ENCODE measurements at regions of chr4 and their contacts with region 1.

Region 1: GRCh38 chr4:1266881-1267763 is 18.2 kb upstream of the CTBP1 start:
- DNase-seq: no peak
- H3K4me3 Mint-ChIP-seq: peak overlapping the region; percentile 76
- H3K27ac Mint-ChIP-seq: peak overlapping the region; percentile 95
- H3K4me1 Mint-ChIP-seq: peaks cover 29% of the 10 kb centered on the region
- H3K27me3 Mint-ChIP-seq: no peaks in the 10 kb centered on the region

Region 2: GRCh38 chr4:1011022-1011694 is 256.0 kb before region 1 on chr4 and contains the start of gene FGFRL1:
- intact Hi-C with region 1: loop called (anchors 5 kb)
- DNase-seq: peak; percentile 89
- H3K4me3 Mint-ChIP-seq: peak within 1 kb of the TSS; percentile 86
- H3K27ac Mint-ChIP-seq: peak within 1 kb of the TSS; percentile 89
- H3K4me1 Mint-ChIP-seq: peaks cover 15% of the 10 kb centered on the region
- H3K27me3 Mint-ChIP-seq: peaks cover 28% of the 10 kb centered on the region
- total RNA-seq, gene FGFRL1: 15.5 TPM in 2 replicates

Region 3: DNA sequence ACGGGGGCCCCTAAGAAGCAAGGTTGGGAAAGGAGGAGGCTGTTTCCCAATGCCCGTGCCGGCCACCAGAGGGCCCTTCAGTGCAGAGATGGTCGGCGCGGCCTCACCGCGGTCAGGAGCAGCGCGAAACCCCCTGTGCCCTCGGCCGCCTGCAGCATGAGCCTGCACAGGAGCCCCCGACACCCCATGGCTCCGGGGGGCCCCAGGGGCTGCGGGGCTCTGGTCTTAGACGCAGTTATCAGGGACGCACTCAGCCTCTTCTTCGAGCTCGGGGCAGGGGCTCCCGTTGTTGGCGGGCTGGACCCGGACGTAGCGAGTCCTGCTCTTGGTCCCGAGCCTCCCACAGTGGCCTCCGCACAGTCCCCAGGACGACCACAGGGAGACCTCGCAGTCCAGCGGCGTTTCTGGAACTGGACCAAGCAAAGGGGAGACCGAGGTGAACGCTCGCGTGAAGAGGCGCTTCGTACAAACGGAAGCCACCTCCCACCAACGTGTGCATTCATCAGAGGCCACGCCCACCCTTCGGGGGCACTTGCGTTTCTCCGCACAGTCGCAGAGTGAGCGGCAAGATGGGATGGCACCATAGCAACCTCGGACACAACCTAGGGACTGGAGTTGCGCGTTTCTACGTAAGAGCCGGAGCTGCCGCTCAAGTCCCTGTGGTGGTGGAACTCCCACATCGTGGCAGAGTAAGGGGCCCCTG is 99.7 kb before region 1 on chr4:
- intact Hi-C with region 1: loop called (anchors 1 kb)
- DNase-seq: peak; percentile 83
- H3K4me3 Mint-ChIP-seq: peak overlapping the region; percentile 79
- H3K27ac Mint-ChIP-seq: peak overlapping the region; percentile 69
- H3K4me1 Mint-ChIP-seq: peaks cover 15% of the 10 kb centered on the region
- H3K27me3 Mint-ChIP-seq: peaks cover 13% of the 10 kb centered on the region

Region 4: DNA sequence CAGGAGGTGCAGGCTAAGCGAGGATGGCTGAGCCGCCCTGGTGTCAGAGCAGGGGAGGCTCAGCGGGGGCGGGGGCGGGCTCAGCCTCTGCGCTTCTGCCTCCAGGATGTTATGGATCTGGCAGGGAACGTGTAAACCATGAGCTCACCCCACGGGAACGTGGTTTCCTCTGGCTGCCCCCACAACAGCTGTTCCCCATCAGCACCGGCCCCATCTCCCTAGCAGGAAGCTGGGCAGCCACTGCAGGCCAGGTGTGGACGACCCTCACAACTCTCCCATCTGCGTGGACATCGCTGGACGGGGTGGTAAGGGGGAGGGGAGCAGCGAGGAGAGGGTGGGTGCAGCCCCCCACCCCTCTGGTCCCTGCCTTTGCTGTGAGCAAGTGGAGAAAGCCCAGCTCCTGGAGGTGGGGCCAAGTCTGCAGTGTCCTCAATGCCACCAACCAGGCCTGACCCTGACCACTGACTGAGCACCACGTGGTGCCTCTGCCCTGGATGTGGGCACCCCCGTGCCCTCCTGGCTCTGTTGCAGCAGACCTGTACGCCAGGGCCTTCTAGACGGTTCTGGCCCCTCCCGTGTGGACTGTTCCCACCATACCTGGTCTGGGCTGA is 66.6 kb before region 1 on chr4:
- intact Hi-C with region 1: loop called (anchors 1 kb)
- DNase-seq: no peak
- H3K4me3 Mint-ChIP-seq: peak overlapping the region; percentile 75
- H3K27ac Mint-ChIP-seq: peak overlapping the region; percentile 100
- H3K4me1 Mint-ChIP-seq: peaks cover 41% of the 10 kb centered on the region
- H3K27me3 Mint-ChIP-seq: no peaks in the 10 kb centered on the region

Region 5: GRCh38 chr4:1351854-1352633 is 84.9 kb after region 1 on chr4:
- intact Hi-C with region 1: loop called (anchors 1 kb)
- DNase-seq: peak; percentile 84
- H3K4me3 Mint-ChIP-seq: no peak overlapping the region
- H3K27ac Mint-ChIP-seq: peak overlapping the region; percentile 70
- H3K4me1 Mint-ChIP-seq: peaks cover 20% of the 10 kb centered on the region
- H3K27me3 Mint-ChIP-seq: no peaks in the 10 kb centered on the region

Region 6: DNA sequence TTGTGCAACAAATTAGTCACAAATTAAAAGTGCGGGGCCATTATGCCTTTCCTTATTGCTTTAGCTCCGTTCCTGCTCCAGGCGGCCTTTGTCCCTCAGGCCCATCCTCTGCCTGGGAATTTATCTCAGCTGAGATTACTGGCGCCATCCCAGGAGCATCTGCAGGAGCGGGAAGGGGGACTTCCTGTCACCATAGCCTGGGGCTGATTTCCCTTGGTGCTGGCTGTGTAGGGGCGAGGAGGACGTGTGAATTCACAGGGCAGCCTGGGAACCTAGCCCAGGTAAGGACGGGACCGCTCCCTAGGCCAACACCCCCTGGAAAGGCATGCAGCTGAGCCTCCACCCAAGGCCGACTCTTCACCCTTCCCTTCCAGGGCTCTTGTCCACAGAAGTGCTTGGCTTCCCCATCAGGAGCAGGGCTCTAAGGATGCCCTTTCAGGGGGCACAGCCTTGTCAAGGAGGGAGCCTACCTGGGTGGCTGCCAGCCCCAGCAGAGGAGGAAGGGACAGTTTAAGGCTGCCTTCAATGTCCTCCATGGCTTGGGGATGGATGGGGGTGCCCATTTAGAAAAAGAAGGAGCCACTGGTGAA is 211.7 kb after region 1 on chr4:
- intact Hi-C with region 1: no loop called
- DNase-seq: no peak
- H3K4me3 Mint-ChIP-seq: no peak overlapping the region
- H3K27ac Mint-ChIP-seq: no peak overlapping the region
- H3K4me1 Mint-ChIP-seq: no peaks in the 10 kb centered on the region
- H3K27me3 Mint-ChIP-seq: no peaks in the 10 kb centered on the region